GM10248 (cell line): ENCODE measurements at regions of chr9 and their contacts with region 1.

Region 1: GRCh38 chr9:121322037-121322775 is 47.8 kb downstream of the STOM start:
- DNase-seq: no peak
- CTCF ChIP-seq: no peak

Region 2: GRCh38 chr9:121207371-121207940 is 114.8 kb before region 1 on chr9:
- CTCF ChIA-PET with region 1: interaction called, 16 read pairs
- POLR2A ChIA-PET with region 1: no interaction called
- DNase-seq: peak; percentile 44
- CTCF ChIP-seq: no peak

Region 3: DNA sequence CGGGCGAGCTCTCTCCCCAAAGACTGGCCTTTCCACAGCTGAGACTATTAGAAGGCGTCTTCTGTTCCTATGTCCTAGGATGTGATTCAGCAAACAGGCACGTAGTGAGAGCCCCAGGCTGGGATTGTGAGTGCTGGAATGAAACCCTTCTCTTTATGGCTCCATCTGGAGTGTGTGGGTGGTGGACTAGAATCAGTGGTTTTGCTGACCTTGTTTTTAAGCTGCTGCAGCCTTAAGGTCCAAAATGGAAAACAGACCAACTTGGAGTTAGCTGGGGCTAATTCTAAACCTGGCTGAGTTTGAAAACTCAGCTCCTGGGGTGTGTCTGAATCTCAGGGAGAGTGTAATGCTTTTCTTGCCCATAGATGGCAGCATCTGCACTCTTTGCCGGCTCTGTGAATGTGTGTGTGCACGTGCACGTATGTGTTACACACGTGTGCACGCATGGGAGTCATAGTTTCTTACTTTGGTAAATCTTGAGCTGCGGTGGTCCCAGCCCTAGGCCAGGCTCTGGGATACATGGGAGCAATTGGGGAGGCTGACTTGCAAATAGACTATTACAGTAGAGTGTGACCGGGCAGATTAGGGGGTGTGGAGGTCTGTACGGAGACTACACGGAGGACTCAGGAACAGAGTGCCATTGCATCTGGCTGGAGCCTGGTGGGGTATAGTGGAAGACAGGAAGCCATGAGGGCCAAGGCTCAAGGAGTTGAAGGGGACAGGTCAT is 43.5 kb before region 1 on chr9:
- CTCF ChIA-PET with region 1: interaction called, 20 read pairs
- POLR2A ChIA-PET with region 1: no interaction called
- DNase-seq: peak; percentile 55
- CTCF ChIP-seq: peak; percentile 46

Region 4: DNA sequence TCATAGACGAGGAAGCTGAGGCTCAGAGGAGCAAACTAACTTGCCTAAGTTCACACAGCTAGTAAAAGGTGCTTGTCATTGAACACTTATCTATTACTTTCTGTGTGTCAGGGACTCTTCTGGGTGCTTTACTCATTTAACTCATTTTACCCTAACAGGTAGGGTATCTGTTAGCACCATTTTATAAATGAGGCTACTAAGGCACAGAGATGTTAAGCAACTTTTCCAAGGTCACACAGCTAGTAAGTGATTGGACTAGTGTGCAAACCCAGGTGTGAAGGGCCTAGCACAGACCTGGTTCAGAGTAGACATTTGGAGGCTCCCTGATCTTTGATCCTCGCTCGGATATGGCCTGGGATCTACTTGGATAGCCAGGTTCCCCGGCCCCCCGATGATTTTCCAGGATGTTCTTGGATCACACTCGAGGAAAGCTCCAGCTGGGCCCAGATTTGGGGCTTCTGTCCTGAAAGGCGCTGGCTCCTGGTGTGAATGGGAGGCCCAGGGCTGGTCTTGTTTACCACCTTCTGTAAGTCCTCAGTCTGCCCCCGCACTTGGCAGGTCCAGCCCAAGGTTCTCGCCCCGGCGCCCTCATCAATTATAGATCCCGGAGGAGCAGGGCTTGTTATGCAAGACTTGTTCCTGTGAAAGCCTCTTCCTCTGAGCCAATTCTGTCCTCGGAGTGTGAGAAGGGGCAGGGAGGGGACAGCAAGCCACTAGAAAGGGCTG is 16.8 kb before region 1 on chr9:
- CTCF ChIA-PET with region 1: interaction called, 39 read pairs
- POLR2A ChIA-PET with region 1: no interaction called
- DNase-seq: no peak
- CTCF ChIP-seq: no peak

Region 5: DNA sequence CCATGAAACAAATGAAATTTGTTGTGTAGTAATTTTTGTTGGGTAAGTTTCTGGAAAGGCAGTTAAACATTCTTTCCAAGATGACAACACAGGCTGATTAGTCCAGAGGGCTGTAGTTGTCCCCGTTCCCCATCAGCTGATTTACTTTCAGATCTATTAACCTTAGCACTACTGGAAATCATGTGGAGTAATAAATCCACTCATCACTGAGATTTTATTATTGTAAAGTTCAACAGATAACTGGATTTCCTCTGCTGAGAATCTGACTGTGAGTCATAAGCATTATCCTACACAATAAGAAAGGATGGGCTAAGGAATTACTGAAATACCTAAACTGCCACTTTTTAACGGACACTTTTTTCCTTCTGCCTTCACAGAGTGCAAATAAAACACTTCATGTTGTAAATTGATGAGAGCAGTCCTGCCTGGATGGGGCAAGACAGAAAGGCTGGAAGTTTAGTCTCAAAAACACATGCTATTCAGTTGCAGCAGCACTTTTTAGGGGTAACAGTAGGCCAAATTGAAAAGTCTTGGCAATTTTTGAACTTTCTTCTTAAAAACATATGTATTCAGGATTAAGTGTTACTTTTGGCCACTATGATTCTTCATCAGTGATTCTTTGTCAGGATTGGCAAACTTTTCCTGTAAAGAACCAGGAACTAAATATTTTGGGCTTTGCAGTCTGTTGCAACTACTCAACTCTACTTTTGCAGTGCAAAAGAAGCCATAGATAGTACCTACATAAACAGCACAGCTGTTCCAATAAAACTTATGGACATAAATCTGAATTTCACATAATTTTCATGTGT is 40.8 kb after region 1 on chr9:
- CTCF ChIA-PET with region 1: interaction called, 16 read pairs
- POLR2A ChIA-PET with region 1: no interaction called
- DNase-seq: no peak
- CTCF ChIP-seq: no peak

Region 6: DNA sequence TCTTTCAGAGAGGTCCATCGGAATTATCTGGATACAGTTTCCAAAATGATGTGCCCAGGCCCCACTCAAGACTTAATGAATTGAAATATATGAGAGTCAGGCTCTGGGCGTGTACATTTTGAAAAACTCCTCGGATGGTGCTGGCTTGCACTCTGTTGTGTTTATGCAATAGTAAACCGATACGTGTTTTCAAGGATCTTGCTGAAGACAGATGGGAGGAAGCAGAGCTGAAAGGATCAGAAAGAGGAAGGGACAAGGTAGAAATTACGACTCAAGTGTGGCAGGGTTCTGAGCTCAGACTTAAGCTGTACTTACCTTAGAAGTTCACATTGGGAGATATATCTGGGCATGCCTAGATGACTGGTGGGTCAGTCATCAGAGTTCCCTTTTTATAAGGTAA is 61.5 kb after region 1 on chr9:
- CTCF ChIA-PET with region 1: interaction called, 66 read pairs
- POLR2A ChIA-PET with region 1: no interaction called
- DNase-seq: no peak
- CTCF ChIP-seq: no peak

Region 7: GRCh38 chr9:121405899-121406298 is 83.7 kb after region 1 on chr9:
- CTCF ChIA-PET with region 1: interaction called, 294 read pairs
- POLR2A ChIA-PET with region 1: no interaction called
- DNase-seq: no peak
- CTCF ChIP-seq: no peak

Region 8: DNA sequence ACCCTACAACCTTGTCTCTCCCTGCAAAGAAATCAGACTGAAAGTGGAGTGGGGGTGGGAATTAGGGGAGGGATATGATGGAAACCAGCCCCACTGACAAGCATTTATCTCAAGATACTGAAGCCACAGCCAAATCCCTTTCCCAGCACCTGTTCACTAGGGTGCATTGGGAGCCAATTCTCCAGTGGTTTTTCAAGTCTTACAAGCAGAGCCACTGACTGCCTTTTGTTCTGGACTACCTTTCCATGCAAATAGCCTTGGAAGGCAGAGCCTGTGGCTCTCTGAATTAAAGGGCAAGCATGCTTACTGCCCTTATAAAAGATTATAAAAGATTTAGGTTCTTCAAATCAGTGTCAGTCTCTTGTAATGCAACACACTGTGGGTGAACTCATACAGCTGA is 186.2 kb after region 1 on chr9:
- CTCF ChIA-PET with region 1: no interaction called
- POLR2A ChIA-PET with region 1: no interaction called
- DNase-seq: no peak
- CTCF ChIP-seq: no peak

Region 9: DNA sequence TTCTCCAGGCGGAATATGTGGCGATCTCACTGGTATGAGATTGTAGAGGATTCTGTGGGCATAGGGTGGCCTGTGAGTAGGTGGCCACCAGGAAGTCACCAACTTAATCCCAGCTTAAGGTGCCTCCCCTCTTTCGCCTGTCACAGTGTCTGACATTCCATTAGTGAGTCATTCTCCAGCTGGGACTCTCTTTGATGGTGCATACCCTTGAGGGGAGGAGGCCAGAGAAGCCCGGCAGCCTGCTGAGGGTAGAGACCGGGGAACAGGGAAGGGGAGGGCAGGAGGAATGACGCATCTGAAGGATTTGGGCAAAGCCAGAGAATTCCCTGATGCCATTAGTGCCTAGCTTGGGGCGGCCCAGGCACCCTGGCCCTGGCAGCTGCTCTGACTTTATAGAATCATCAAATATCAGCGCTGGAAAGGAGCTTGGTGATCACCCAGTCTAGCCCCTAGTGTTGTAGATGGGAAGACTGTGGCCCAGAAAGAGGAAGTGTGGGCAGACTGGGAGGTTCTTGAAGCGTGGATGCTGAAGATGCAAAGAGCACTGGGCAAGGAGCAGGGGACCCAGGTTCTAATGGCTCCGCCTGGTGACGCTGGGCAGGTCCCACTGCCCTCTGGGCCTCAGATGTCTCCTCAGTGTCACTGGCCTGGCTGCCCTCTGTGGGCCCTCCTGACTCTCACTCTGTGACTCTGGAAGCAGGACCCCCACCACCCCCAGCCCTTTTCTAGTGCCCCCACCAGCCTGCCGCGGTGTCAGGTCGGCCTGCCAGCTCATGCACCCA is 370.6 kb after region 1 on chr9:
- CTCF ChIA-PET with region 1: no interaction called
- POLR2A ChIA-PET with region 1: no interaction called
- DNase-seq: no peak
- CTCF ChIP-seq: no peak